ENCODE measurements at regions of chr2 and their contacts with region 1.

Region 1: DNA sequence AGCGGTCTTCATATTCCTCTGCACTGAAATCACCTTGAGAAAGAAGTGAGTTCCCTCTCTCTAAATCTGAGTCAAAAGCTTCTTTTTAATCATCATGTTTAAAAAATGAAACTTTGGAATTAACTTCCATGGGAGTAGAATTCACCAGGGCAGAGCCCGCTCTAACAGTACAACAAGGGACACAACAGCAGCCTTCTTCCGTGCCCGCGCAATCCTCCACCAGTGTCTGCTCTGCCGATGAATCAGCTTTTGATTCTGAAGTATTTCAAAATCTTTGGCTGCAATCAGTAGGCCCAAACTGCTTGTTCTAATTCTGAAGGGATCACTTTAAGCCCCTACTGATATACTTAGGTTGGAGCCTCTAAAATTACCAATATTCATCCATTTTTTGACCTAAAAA is 76.9 kb downstream of the USP40 start:
- H3K4me3 ChIP-seq: no peak overlapping the region
- H3K27ac ChIP-seq: no peak overlapping the region
- H3K4me1 ChIP-seq: no peaks in the 10 kb centered on the region
- CTCF ChIP-seq: no peak

Region 2: DNA sequence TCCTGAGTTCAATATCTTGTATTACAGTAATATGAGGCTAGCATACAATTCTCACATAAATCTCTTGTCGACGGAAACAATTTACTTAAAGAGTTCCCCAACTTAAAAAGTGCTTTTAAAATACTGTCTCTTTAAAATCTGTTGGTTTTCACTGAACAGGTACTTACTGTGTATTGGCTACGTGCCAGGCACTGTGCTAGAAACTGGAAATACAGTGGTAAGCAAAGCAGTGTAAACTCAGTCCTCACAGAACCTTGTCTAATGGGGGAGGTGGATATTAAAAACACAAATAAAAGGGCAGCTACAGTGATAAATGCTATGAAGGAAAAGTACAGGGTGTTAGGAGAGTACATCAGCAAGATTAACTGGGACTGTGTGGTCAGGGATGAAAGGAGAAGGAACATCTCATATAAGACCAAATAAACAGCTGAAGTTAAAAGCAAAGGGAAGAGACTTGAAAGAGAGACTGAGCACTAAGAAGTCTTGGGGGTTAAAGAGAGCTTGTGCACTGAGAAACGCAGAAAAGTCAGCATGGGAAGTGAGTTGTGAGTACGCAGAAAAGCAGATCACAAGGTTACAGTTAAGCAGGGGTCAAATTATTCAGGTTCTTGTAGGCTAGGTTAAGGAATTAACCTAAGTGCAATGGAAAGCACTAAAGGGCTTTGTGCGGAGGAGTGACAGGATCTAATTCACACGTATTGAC is 24.4 kb after region 1 on chr2:
- CTCF ChIA-PET with region 1: interaction called, 3 read pairs
- POLR2A ChIA-PET with region 1: interaction called, 12 read pairs
- H3K4me3 ChIP-seq: no peak overlapping the region
- H3K27ac ChIP-seq: no peak overlapping the region
- H3K4me1 ChIP-seq: peaks cover 6% of the 10 kb centered on the region
- CTCF ChIP-seq: no peak

Measured in HEK293 (cell line).